ENCODE measurements at regions of chr3 and their contacts with region 1.

Region 1: DNA sequence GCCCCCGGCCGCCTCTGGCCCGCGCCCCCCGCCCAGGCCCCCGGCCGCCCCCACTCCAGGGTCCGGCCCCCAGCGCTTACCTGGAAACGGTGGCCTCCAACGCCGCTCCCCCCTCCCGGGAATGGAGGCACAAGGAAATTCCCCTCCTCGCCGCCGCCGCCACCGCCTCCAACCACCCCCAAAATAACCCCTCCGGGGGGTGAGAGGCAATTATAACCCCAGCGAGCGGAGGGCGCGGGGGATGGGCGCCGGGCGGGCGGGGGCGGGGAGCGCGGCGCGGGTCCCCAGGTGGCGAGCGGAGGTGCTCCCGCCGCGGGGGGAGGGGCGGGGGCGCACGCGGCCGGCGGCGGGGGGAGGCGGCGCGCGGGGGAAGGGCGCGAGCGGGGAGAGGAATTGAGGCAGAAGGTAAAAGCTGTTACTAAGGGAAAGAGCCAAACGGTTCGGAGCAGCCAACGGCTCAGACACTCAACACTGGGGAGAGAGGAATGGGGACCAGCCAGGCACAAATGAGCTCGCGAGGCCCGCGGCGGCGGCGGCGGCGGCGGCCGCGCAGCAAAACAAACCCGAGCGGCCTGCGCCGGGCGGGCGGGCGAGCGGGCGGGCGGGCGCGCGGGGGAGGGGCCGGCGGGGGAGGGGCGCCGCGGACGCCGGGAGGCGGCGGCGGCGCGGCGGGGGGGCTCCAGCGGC is at the start of gene TBL1XR1:
- DNase-seq: peak; percentile 92 to 96
- H3K4me3 ChIP-seq: peak within 1 kb of the TSS; percentile 82
- H3K27ac ChIP-seq: peak within 1 kb of the TSS; percentile 97
- H3K4me1 ChIP-seq: peaks cover 44% of the 10 kb centered on the region
- H3K27me3 ChIP-seq: no peaks in the 10 kb centered on the region
- CTCF ChIP-seq: no peak
- total RNA-seq, gene TBL1XR1: 232 and 243 TPM in 2 replicates

Region 2: DNA sequence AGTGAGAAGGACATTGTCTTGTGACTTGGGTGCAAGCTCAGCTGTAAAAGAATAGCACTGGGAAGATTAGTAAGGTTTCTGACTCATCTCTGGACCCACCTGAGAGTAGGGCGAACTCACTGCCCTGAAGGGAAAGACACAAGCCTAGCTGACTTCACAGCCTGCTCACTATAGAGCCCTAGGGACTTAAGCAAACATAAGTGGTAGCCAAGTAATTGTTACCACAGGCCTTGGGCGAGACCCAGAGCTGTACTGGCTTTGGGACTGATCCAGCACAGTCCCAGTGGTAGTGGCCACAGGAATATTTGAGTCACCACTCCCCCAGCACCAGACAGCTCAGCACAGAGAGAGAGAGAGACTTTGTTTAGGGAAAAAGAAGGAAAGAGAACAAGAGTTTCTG is 429.8 kb before region 1 on chr3:
- CTCF ChIA-PET with region 1: no interaction called
- POLR2A ChIA-PET with region 1: no interaction called
- intact Hi-C with region 1: loop called (anchors 5 kb)
- DNase-seq: peak; percentile 87
- H3K4me3 ChIP-seq: no peak overlapping the region
- H3K27ac ChIP-seq: peak overlapping the region; percentile 58
- H3K4me1 ChIP-seq: peaks cover 21% of the 10 kb centered on the region
- H3K27me3 ChIP-seq: no peaks in the 10 kb centered on the region
- CTCF ChIP-seq: no peak

Region 3: DNA sequence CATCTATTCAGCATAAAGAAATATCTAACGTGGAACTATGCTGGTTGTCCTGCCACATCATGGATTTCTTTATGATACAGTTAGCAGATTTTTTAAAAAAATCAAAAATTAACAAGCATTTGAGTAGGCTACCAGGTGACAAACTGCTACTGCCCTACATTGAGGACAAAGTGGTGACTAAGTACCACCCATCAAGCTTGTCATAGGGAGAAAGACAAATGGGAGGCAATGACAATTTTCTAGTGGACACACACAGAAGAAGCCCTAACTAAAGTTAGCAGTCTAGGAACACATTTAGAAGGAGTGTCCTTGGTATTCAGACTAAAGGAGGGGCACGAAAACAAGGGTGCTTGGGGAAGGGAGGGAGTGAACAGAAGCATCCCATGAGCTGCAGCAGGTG is 131.1 kb before region 1 on chr3:
- CTCF ChIA-PET with region 1: no interaction called
- POLR2A ChIA-PET with region 1: no interaction called
- intact Hi-C with region 1: no loop called
- DNase-seq: no peak
- H3K4me3 ChIP-seq: no peak overlapping the region
- H3K27ac ChIP-seq: no peak overlapping the region; the same call in 1 of the 2 replicates
- H3K4me1 ChIP-seq: peaks cover 18% of the 10 kb centered on the region; the same call in 1 of the 2 replicates
- H3K27me3 ChIP-seq: no peaks in the 10 kb centered on the region
- CTCF ChIP-seq: no peak

Region 4: DNA sequence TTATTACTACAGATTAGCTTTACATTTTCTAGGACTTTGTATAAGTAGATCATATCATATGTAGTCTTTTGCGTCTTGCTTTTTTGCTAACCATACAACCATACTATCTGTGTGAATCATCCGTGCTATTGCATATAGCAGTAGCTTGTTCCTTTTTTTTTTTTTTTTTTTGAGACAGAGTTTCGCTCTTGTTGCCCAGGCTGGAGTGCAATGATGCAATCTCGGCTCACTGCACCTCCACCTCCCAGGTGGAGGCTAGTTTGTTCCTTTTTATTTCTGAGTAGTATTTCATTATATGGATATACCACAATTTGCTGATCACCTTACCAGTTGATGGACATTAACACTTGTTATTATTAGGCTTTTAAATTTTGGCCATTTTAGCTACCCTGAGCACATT is 54.6 kb after region 1 on chr3:
- CTCF ChIA-PET with region 1: no interaction called
- POLR2A ChIA-PET with region 1: no interaction called
- intact Hi-C with region 1: no loop called
- DNase-seq: no peak
- H3K4me3 ChIP-seq: no peak overlapping the region
- H3K27ac ChIP-seq: no peak overlapping the region
- H3K4me1 ChIP-seq: peaks cover 18% of the 10 kb centered on the region
- H3K27me3 ChIP-seq: no peaks in the 10 kb centered on the region
- CTCF ChIP-seq: no peak

Region 5: DNA sequence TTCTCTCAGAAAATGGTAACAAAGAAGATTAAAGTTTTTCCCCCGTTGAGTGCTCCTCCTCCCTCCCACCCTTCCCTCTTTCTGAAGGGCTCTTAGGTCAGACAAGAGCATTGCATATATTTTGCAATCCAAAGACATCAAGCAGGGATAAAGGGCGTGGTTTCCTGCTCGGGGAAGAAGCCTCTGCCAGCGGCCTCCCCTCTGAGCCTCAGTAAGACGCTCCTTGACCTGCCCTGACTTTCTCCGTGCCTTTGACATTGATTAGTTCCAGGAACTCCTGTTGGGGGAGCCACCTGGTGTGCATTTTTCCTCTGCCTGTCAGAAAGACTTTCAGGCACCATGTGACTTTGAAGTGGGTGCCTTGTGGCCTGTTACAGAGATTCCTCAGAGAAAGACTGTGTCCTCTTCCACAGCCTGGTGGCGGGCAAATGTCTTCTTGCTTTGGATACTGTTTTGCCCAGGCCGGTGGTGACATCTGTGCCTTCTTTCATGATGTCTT is 87.2 kb after region 1 on chr3:
- CTCF ChIA-PET with region 1: no interaction called
- POLR2A ChIA-PET with region 1: no interaction called
- intact Hi-C with region 1: loop called (anchors 2 kb)
- DNase-seq: no peak
- H3K4me3 ChIP-seq: no peak overlapping the region
- H3K27ac ChIP-seq: no peak overlapping the region
- H3K4me1 ChIP-seq: peaks cover 59% of the 10 kb centered on the region
- H3K27me3 ChIP-seq: no peaks in the 10 kb centered on the region
- CTCF ChIP-seq: no peak

Region 6: DNA sequence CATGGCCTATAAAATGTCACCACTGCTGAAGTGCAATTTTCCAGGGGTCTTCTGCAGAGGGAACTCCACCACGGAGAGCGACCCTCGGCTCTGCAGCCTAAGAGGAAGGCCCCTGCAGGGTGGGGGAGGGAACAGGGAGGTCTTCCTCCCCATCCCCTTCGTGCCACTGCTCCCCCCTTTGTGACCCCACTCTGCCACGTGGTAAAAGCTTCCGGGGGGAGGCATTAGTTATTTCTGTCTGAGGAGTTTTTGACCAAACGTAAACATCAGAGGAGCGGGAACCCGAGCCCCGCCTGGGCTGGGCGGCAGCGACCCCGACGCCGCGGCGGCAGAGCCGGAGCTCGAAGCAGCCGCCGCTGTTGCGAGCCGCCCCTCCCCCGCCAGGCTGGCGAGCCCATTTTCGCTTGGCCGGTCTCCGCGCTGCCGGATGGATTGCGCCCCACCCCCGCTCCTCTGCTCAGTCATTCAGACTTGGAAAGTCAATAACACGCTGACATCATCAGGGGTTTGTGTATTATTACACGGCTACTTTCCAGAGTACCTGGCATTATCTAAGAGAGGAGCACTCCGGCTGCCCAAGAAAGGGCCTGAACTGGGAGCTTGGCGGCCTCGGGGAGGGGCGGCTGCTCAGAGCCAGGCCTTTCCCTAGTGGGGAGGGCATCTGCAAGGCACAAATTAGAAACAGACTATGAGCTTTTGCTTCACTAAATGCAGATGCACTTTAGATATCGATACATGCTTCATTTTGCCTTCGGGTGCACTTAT is 162.6 kb after region 1 on chr3:
- CTCF ChIA-PET with region 1: interaction called, 4 read pairs
- POLR2A ChIA-PET with region 1: interaction called, 17 read pairs
- intact Hi-C with region 1: loop called (anchors 1 kb)
- DNase-seq: peak; percentile 98
- H3K4me3 ChIP-seq: peak overlapping the region; percentile 49
- H3K27ac ChIP-seq: peak overlapping the region; percentile 96
- H3K4me1 ChIP-seq: peaks cover 70% of the 10 kb centered on the region
- H3K27me3 ChIP-seq: no peaks in the 10 kb centered on the region
- CTCF ChIP-seq: no peak

Region 7: DNA sequence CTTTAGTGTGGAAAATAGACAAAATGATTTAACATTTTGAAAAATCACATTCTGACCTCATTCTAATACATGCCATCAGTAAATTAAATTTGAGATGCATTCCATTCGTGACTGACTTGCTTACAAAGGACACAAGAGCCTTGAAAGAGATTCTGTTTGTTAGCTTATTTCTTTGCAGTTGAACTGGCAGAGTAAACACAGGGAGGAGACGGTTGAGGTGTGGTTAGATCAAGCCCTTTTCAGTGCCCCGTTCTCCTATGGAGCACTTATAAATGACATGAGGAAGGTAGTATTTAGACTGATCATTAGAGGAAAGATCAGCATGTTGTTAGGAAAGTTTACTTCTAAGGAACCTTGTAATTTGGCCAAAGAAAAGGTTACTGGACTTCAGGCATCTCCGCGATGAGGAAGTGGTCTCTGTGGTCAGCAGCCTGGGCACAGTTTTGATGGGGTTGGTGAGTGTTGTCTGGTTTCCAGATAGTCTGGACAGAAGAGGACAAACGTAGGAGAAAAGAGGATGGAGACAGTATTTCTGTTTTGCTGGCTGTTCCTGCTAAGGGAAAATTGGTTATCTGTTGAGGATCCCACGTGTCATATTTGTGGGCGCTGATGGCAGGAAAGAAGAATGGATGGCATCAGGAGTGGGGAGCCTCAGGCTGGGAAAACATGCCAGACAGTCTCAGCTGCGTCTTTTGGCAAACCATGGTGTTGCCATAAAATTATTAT is 329.0 kb after region 1 on chr3:
- CTCF ChIA-PET with region 1: interaction called, 3 read pairs
- POLR2A ChIA-PET with region 1: no interaction called
- intact Hi-C with region 1: loop called (anchors 2 kb)
- DNase-seq: peak; percentile 25 to 87
- H3K4me3 ChIP-seq: no peak overlapping the region
- H3K27ac ChIP-seq: no peak overlapping the region
- H3K4me1 ChIP-seq: peaks cover 79% of the 10 kb centered on the region
- H3K27me3 ChIP-seq: no peaks in the 10 kb centered on the region
- CTCF ChIP-seq: no peak

Region 8: GRCh38 chr3:177777699-177778098 is 580.5 kb after region 1 on chr3:
- CTCF ChIA-PET with region 1: no interaction called
- POLR2A ChIA-PET with region 1: no interaction called
- intact Hi-C with region 1: loop called (anchors 1 kb)
- DNase-seq: peak; percentile 28 to 44
- H3K4me3 ChIP-seq: no peak overlapping the region
- H3K27ac ChIP-seq: no peak overlapping the region
- H3K4me1 ChIP-seq: peaks cover 24% of the 10 kb centered on the region
- H3K27me3 ChIP-seq: no peaks in the 10 kb centered on the region
- CTCF ChIP-seq: peak; percentile 56

Region 9: DNA sequence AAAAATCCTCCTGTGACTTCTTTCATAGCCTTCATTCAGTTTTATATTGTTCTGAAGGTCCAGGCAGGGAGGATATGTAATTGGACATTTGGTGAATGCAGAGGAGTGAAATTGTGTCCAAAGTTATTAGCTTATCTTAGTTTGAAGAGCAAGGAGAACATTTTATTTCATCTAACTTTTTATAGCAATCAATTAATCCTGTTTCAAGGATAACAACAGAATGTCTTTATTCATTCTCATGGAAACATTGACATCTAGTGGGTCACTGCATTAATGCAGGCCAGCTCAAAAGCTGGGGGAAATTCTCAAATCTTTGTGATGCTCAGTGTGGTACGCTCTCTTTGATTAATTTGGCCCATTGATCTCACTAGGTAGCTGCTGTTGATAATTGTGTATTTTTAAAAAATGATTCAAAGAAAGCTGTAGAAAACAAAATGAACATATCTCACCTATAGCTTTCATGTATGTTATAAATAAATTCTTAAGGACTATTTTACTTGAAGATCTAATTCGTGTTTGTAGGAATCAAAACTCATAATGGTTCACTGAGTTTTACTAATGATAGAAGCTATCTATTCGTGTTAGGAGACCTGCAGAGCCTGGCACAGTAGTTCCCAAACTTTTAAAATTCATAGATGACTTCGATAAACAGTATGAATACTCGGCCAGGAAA is 1188.2 kb after region 1 on chr3:
- CTCF ChIA-PET with region 1: no interaction called
- POLR2A ChIA-PET with region 1: no interaction called
- intact Hi-C with region 1: loop called (anchors 1 kb)
- DNase-seq: peak in 1 of 2 experiments; percentile 31
- H3K4me3 ChIP-seq: no peak overlapping the region
- H3K27ac ChIP-seq: no peak overlapping the region
- H3K4me1 ChIP-seq: peaks cover 26% of the 10 kb centered on the region
- H3K27me3 ChIP-seq: no peaks in the 10 kb centered on the region
- CTCF ChIP-seq: peak; percentile 98